ENCODE measurements at regions of chr1 and their contacts with region 1.

Region 1: GRCh38 chr1:15816674-15817073 is 9.2 kb upstream of the UQCRHL start:
- DNase-seq: no peak
- H3K4me3 ChIP-seq: no peak overlapping the region
- CTCF ChIP-seq: no peak

Region 2: GRCh38 chr1:15765495-15766194 is 51.0 kb before region 1 on chr1:
- in situ Hi-C with region 1: no loop called
- DNase-seq: peak; percentile 65
- H3K4me3 ChIP-seq: no peak overlapping the region
- CTCF ChIP-seq: no peak

Region 3: GRCh38 chr1:15870421-15870820 is 53.7 kb after region 1 on chr1:
- in situ Hi-C with region 1: loop called (anchors 5 kb)
- DNase-seq: no peak
- H3K4me3 ChIP-seq: no peak overlapping the region
- CTCF ChIP-seq: no peak

Region 4: DNA sequence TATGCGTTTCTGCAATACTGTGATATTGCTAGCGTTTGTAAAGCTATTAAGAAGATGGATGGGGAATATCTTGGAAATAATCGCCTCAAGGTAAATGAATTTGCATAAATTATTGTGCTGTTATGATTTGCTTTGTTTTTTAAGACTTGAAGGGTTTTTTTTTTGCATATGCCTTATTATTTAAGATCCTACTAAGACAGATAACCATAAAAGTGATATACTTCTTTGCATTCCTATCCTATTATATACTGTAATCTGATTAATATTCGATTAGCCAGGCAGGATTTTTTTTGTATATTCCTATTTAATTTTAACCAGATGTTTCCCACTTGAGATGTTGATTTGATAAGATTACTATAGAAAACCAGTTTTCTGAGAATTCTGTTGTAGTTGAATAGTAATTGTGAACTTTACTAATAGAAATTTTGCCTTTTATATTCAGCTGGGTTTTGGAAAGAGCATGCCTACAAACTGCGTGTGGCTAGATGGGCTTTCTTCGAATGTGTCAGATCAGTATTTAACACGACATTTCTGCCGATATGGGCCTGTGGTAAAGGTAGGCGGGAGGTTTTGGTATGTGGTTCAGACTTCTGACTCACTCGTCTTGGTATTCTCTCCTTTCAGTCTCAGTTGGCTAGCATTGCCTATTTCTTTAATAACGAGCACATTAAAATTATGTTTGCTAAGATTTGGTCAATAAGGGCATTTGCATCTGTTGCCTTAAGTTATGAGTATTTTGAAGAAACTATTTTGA is 102.5 kb after region 1 on chr1:
- in situ Hi-C with region 1: no loop called
- DNase-seq: peak; percentile 82
- H3K4me3 ChIP-seq: no peak overlapping the region
- CTCF ChIP-seq: no peak